Stomach (tissue), 19 donors: ENCODE measurements at regions of chr19 and their contacts with region 1.

Region 1: GRCh38 chr19:2750808-2751443 is 11.1 kb upstream of the SLC39A3 start:
- DNase-seq: no peak
- H3K4me3 ChIP-seq: no peak overlapping the region
- H3K27ac ChIP-seq: no peak overlapping the region
- H3K4me1 ChIP-seq: peaks cover 0 to 8% (median 6%) of the 10 kb centered on the region in 4 donors
- H3K27me3 ChIP-seq: no peaks in the 10 kb centered on the region
- CTCF ChIP-seq: no peak
- EP300 ChIP-seq: no peak
- POLR2A ChIP-seq: no peak

Region 2: DNA sequence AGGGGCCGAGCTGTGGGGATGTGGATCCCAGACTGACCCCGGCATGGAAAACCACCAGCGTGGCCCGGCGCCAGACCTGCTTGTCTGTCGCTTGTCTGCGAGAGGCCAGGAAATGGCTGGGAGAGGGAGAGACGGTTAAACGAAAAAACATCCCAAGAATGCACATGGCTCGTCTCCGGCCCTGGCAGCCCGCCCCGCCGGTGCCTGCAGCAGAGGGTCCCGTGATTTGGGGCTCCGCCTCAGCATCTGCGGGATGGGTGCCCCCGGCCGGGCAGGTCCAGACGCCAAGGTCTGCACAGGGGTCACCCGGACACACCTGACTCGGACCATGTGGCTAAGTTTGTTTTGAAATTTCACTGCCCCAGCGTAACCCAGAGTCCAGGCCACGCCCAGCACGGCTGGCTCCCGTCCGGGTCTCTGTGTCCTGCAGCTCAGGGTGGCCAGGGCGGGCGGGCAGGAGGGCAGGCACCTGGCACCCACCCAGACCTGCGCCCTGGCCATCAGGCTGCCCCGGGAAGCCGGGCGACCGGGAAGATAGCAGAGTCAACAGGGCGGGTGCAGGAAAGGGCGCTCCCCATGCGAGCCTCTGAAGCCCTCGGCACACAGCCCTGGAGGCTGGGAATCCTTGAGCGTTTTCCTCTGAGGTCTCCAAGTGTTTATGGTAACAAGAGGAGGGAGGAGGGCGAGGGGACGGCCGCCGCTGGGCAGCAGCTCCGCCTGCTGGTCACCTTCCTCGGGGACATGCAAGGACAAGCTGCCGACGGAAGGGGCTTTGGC is 171.8 kb before region 1 on chr19:
- intact Hi-C with region 1: no loop called
- DNase-seq: peak; percentile 95 to 96
- H3K4me3 ChIP-seq: peak overlapping the region; percentile 33 to 46 (median 43)
- H3K27ac ChIP-seq: peak overlapping the region; percentile 85 to 88 (median 86)
- H3K4me1 ChIP-seq: peaks cover 31 to 46% (median 44%) of the 10 kb centered on the region in 4 donors
- H3K27me3 ChIP-seq: no peaks in the 10 kb centered on the region
- CTCF ChIP-seq: peak in 5 of 7 experiments; percentile 80 to 95 (median 92)
- EP300 ChIP-seq: peak; percentile 74
- POLR2A ChIP-seq: no peak

Region 3: GRCh38 chr19:2648528-2648937 is 102.4 kb before region 1 on chr19:
- intact Hi-C with region 1: loop called (anchors 5 kb)
- DNase-seq: peak; percentile 83 to 87
- H3K4me3 ChIP-seq: no peak overlapping the region
- H3K27ac ChIP-seq: no peak overlapping the region
- H3K4me1 ChIP-seq: peaks cover under 1 to 12% (median 6%) of the 10 kb centered on the region in 4 donors
- H3K27me3 ChIP-seq: no peaks in the 10 kb centered on the region
- CTCF ChIP-seq: peak in 5 of 7 experiments; percentile 69 to 95 (median 85)
- EP300 ChIP-seq: no peak
- POLR2A ChIP-seq: no peak

Region 4: GRCh38 chr19:2811735-2812406 is 60.9 kb after region 1 on chr19:
- intact Hi-C with region 1: no loop called
- DNase-seq: no peak
- H3K4me3 ChIP-seq: no peak overlapping the region
- H3K27ac ChIP-seq: no peak overlapping the region
- H3K4me1 ChIP-seq: no peaks in the 10 kb centered on the region
- H3K27me3 ChIP-seq: no peaks in the 10 kb centered on the region
- CTCF ChIP-seq: no peak
- EP300 ChIP-seq: no peak
- POLR2A ChIP-seq: no peak

Region 5: DNA sequence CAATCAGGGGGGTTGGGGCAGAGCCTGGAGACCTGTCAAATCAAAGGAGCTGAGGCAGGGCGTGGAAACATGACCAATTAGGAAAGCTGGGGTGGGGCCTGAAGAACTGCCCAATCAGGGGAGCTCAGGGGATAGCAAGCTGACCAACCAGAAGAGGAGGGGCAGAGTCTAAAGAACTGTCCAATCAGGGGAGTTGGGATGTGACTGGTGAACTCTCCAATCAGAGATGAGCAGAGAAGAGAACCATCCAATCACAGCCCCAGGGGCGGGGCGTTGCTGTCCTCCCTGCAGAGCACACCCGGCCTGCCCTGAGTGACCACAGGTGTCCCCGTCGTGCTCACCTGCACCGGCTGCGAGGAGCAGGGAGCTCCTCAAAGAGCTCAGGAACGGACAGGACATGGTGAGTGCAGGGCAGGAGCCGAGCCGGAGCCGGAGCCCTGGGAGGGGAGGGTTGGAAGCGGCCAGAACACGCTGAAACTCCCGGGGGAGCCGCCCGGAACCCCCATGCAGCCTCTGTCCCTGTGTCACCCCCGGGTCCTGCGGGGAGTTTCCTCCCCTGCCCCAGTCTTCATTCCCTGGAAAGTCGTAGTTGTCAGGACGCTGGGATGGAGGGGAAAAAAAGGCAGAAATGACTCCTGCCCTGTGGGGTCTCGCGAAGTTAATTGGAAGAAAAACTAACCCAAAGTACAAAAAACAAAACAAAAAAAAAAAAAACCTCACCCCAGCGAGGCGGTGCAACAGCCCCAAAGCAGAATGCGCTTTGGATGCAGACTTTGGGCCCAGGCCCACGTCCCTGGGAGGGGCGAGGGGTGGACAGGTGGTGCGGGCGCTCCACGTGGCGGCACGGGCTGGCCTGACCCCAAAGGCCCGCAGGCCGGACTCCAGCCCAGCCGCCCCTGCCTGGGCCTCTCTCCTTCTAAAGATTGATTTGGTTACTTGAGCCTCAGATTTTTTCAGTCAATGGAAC is 116.4 kb after region 1 on chr19 and contains the start of gene ZNF556:
- intact Hi-C with region 1: no loop called
- DNase-seq: peak in 1 of 2 donors; percentile 25
- H3K4me3 ChIP-seq: peak within 1 kb of the TSS; percentile 22 to 34 (median 30)
- H3K27ac ChIP-seq: no peak within 1 kb of the TSS
- H3K4me1 ChIP-seq: no peaks in the 10 kb centered on the region
- H3K27me3 ChIP-seq: no peaks in the 10 kb centered on the region
- CTCF ChIP-seq: no peak
- EP300 ChIP-seq: no peak
- POLR2A ChIP-seq: no peak
- total RNA-seq, gene ZNF556: 0.58 TPM in 1 of 5 donors, not detected in the others